HEK293 (cell line): ENCODE measurements at regions of chr10 and their contacts with region 1.

Region 1: DNA sequence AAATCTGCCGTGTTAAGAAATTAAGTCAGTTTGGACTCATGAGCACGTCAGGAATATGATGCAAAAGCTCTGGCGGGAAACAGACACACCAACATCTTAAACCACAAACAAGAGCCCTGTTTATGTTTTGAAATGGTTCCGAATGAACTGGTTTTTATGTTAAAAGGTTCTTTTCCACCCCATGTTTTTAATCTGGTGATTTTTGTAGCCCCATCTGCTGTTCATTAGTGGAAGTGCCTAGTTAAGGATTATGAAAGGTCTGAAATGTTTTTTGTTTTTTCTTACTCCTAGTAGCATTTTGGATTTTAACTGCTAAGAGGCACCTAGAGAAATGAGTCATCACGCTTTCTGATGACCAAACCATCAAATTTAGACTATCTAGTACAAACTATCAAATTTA is 404.1 kb upstream of the MKI67 start:
- H3K4me3 ChIP-seq: no peak overlapping the region
- H3K27ac ChIP-seq: no peak overlapping the region
- H3K4me1 ChIP-seq: peaks cover 17% of the 10 kb centered on the region
- CTCF ChIP-seq: no peak

Region 2: DNA sequence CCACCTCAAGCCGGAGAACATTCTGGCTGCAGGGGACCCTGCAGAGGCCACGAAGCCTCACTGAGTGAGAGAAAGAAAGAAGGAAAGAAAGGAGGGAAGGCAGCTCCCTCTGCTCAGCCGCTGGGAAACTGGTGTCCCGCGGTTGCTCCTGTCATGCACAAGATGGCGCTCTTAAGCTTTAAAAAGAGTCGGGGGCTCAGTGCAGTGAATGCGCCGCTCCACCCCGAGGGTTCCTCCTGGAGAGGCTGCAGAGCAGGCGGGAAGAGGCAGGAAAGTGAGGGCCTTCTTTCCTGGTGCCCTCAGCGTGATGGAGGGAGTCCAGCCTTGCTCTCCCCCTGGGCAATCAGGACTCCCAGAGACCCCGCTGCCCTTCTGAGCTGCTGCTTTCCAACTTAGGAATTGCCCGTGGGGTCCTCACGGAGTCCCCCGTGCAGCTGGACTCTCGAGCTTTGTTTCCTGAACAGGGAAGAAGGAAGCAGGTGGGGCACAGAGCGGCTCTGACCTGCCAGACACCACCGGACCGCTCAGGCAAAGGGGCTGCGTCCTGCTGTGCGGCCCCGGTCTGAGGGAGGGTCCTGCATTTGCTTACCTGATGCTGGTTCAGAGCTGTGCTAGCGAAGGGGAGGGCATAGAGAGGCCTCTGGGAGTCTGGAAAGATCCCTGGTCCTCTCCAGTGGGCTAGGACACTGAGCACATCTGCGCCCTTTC is 262.1 kb before region 1 on chr10:
- CTCF ChIA-PET with region 1: interaction called, 27 read pairs
- POLR2A ChIA-PET with region 1: no interaction called
- H3K4me3 ChIP-seq: no peak overlapping the region
- H3K27ac ChIP-seq: no peak overlapping the region
- H3K4me1 ChIP-seq: no peaks in the 10 kb centered on the region
- CTCF ChIP-seq: peak; percentile 75

Region 3: GRCh38 chr10:128642023-128642422 is 111.7 kb after region 1 on chr10:
- CTCF ChIA-PET with region 1: no interaction called
- POLR2A ChIA-PET with region 1: no interaction called
- H3K4me3 ChIP-seq: no peak overlapping the region
- H3K27ac ChIP-seq: no peak overlapping the region
- H3K4me1 ChIP-seq: no peaks in the 10 kb centered on the region
- CTCF ChIP-seq: no peak